ENCODE measurements at regions of chr9 and their contacts with region 1.

Region 1: GRCh38 chr9:15135164-15135792 is 171.7 kb downstream of the TTC39B start:
- DNase-seq: peak; percentile 78
- H3K4me3 ChIP-seq: peak overlapping the region in 2 of 4 donors; percentile 13 to 24
- H3K27ac ChIP-seq: peak overlapping the region in 1 of 4 donors; percentile 30
- H3K4me1 ChIP-seq: peaks cover 0 to 14% (median 9%) of the 10 kb centered on the region in 4 donors
- H3K27me3 ChIP-seq: no peaks in the 10 kb centered on the region
- CTCF ChIP-seq: peak; percentile 64 to 92 (median 76)
- EP300 ChIP-seq: no peak
- POLR2A ChIP-seq: no peak

Region 2: DNA sequence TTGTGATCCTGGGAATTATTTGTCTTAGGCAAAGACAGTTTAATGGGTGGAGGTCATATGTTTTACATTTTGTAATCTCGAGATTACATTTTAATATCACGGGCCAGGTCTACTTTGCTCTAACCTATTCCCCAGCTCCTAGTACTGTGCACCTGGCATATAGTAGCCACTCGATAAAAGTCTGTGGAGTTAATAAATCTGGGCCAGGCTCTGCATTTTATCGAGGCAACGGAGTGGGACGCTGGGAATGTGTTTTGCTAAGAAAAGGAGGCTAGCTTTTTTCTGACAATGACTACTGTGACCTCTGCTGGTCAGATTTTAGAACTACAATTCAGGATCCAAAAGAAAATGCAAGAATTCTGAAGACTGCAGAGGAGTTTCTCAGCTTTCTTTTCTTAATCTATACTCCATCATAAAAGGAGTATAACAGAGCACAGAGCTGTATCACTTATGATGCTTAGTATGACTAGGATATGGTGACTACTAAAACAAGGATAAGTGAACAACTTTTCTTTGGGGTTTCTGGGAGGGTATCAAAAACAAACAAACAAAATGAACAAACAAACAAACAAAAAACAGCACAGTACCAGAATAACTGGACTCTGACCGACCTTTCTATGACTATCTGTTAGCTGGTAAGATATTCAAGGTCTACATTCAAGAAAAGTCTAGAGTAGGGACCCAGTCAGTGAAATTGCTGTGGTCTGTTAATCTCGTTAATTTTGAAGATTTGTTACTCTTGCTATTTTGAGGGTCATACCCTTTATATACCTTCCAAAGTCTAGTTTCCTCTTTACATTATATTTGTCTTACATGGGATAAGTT is 366.7 kb before region 1 on chr9:
- intact Hi-C with region 1: loop called (anchors 10 kb)
- DNase-seq: no peak
- H3K4me3 ChIP-seq: no peak overlapping the region
- H3K27ac ChIP-seq: no peak overlapping the region
- H3K4me1 ChIP-seq: no peaks in the 10 kb centered on the region
- H3K27me3 ChIP-seq: no peaks in the 10 kb centered on the region
- CTCF ChIP-seq: peak; percentile 26 to 83 (median 58)
- EP300 ChIP-seq: no peak
- POLR2A ChIP-seq: no peak

Region 3: DNA sequence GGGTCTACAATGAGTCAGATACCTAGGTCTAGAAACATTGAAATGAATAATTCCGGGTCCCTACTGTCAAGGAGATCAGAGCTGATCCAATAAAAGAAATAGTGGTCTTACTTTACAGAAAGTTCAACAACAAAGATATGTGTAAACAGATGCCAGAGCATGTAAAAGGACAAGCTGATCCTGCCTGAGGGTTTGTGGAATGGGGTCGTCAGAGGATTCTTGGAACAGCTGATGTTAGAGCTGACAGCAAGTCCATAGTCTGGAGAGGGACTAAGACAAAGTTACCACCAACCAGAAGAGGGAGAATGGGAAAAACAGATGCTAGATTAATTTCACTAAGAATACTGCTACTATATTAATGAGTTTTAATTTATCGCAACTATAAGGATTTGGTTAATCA is 296.6 kb before region 1 on chr9:
- intact Hi-C with region 1: no loop called
- DNase-seq: no peak
- H3K4me3 ChIP-seq: no peak overlapping the region
- H3K27ac ChIP-seq: no peak overlapping the region
- H3K4me1 ChIP-seq: no peaks in the 10 kb centered on the region
- H3K27me3 ChIP-seq: no peaks in the 10 kb centered on the region
- CTCF ChIP-seq: no peak
- EP300 ChIP-seq: no peak
- POLR2A ChIP-seq: no peak

Region 4: GRCh38 chr9:14863402-14863801 is 271.9 kb before region 1 on chr9:
- intact Hi-C with region 1: loop called (anchors 2 kb)
- DNase-seq: no peak
- H3K4me3 ChIP-seq: no peak overlapping the region
- H3K27ac ChIP-seq: peak overlapping the region in 3 of 4 donors; percentile 11 to 88 (median 79)
- H3K4me1 ChIP-seq: peaks cover 0 to 40% (median 35%) of the 10 kb centered on the region in 4 donors
- H3K27me3 ChIP-seq: no peaks in the 10 kb centered on the region
- CTCF ChIP-seq: no peak
- EP300 ChIP-seq: no peak
- POLR2A ChIP-seq: no peak

Region 5: GRCh38 chr9:15086778-15087324 is 48.4 kb before region 1 on chr9:
- intact Hi-C with region 1: no loop called
- DNase-seq: no peak
- H3K4me3 ChIP-seq: no peak overlapping the region
- H3K27ac ChIP-seq: no peak overlapping the region
- H3K4me1 ChIP-seq: no peaks in the 10 kb centered on the region
- H3K27me3 ChIP-seq: no peaks in the 10 kb centered on the region
- CTCF ChIP-seq: no peak
- EP300 ChIP-seq: no peak
- POLR2A ChIP-seq: no peak

Region 6: GRCh38 chr9:15104826-15105420 is 30.4 kb before region 1 on chr9:
- intact Hi-C with region 1: loop called (anchors 2 kb)
- DNase-seq: no peak
- H3K4me3 ChIP-seq: no peak overlapping the region
- H3K27ac ChIP-seq: no peak overlapping the region
- H3K4me1 ChIP-seq: no peaks in the 10 kb centered on the region
- H3K27me3 ChIP-seq: no peaks in the 10 kb centered on the region
- CTCF ChIP-seq: peak in 3 of 4 experiments; percentile 41 to 65 (median 56)
- EP300 ChIP-seq: no peak
- POLR2A ChIP-seq: no peak

Region 7: DNA sequence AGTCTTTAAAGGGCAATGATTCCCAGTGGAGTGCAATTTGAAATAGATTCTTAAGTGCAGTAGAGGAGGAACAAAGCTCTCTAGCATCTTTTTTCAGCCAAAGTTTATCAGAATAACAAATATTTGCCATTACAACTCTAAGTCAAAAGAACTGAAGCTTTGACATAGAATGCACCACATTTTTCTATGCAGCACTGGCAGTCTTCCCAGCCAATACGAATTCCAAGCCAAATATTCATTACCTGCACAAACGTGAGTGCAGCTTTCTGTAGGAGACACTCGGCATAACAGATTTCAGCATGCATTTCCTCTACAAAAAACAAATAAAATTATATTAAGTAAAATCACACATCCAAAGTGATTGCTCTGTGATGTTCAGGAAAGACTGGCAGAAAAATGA is 68.3 kb after region 1 on chr9:
- intact Hi-C with region 1: no loop called
- DNase-seq: no peak
- H3K4me3 ChIP-seq: no peak overlapping the region
- H3K27ac ChIP-seq: no peak overlapping the region
- H3K4me1 ChIP-seq: no peaks in the 10 kb centered on the region
- H3K27me3 ChIP-seq: no peaks in the 10 kb centered on the region
- CTCF ChIP-seq: no peak
- EP300 ChIP-seq: no peak
- POLR2A ChIP-seq: no peak

Region 8: DNA sequence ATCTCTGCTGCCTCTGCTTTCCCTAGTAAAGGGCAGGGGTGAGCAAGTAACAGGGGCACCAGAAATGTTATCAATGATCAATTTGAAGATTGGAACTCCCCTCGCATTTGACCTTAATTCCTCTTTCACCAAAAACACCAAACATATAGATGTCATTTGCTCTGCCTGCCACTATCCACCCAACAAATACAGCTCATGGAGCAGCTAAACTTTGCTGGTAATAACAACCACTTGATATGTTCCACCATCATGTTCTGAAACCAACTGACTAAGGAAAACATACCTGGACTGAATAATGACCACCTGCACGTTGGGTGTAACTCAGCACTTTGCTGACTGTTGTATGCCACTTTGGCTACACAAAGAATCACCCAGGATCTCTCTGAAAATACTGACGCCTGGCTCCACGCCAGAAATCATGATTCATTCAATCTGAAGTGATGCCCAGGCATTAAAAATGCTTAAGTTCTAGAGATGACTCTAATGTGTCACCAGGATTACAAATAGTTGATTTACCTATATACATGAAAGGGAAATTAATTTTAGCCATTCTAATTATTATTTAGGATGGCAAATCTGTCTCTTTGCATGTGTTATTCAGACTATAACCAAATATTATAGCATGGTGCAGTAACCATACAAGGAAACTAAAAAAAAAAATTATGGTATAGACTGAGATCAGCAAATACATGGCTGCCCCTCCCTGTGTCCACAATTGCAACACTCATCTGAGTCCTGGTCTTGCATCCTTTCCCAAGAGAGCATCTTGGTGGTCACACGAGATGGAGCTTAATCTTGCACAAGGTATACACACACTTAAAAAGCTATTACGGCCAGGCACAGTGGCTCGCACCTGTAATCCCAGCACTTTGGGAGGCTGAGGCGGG is 214.9 kb after region 1 on chr9:
- intact Hi-C with region 1: no loop called
- DNase-seq: no peak
- H3K4me3 ChIP-seq: no peak overlapping the region
- H3K27ac ChIP-seq: no peak overlapping the region
- H3K4me1 ChIP-seq: no peaks in the 10 kb centered on the region
- H3K27me3 ChIP-seq: no peaks in the 10 kb centered on the region
- CTCF ChIP-seq: no peak
- EP300 ChIP-seq: no peak
- POLR2A ChIP-seq: no peak

Measured in sigmoid colon (tissue), 7 donors.